ENCODE measurements at regions of chr17 and their contacts with region 1.

Region 1: GRCh38 chr17:73231841-73232586 is 29.7 kb downstream of the CPSF4L start:
- DNase-seq: peak; percentile 93 to 99 (median 96)
- ATAC-seq: peak; percentile 95
- H3K4me3 ChIP-seq: peak overlapping the region; percentile 95 to 100
- H3K4me3 Mint-ChIP-seq: peak overlapping the region; percentile 97
- H3K27ac ChIP-seq: peak overlapping the region; percentile 75 to 84
- H3K27ac Mint-ChIP-seq: peak overlapping the region; percentile 98
- H3K4me1 ChIP-seq: peaks cover 46% of the 10 kb centered on the region
- H3K4me1 Mint-ChIP-seq: peaks cover 71% of the 10 kb centered on the region
- H3K27me3 ChIP-seq: no peaks in the 10 kb centered on the region
- H3K27me3 Mint-ChIP-seq: no peaks in the 10 kb centered on the region
- CTCF ChIP-seq: no peak

Region 2: GRCh38 chr17:73192894-73193701 is 38.9 kb before region 1 on chr17 and contains the start of gene COG1:
- CTCF ChIA-PET with region 1: interaction called, 21 read pairs
- POLR2A ChIA-PET with region 1: interaction called, 10 read pairs
- intact Hi-C with region 1: loop called (anchors 1 kb)
- DNase-seq: peak; percentile 76 to 95 (median 89)
- ATAC-seq: peak; percentile 87
- H3K4me3 ChIP-seq: peak within 1 kb of the TSS; percentile 81 to 91
- H3K4me3 Mint-ChIP-seq: peak within 1 kb of the TSS; percentile 98
- H3K27ac ChIP-seq: peak within 1 kb of the TSS; percentile 79 to 83
- H3K27ac Mint-ChIP-seq: peak within 1 kb of the TSS; percentile 95
- H3K4me1 ChIP-seq: peaks cover 20% of the 10 kb centered on the region
- H3K4me1 Mint-ChIP-seq: peaks cover 27% of the 10 kb centered on the region
- H3K27me3 ChIP-seq: no peaks in the 10 kb centered on the region
- H3K27me3 Mint-ChIP-seq: no peaks in the 10 kb centered on the region
- CTCF ChIP-seq: no peak
- total RNA-seq, gene COG1: 91.3 to 95.6 TPM

Region 3: DNA sequence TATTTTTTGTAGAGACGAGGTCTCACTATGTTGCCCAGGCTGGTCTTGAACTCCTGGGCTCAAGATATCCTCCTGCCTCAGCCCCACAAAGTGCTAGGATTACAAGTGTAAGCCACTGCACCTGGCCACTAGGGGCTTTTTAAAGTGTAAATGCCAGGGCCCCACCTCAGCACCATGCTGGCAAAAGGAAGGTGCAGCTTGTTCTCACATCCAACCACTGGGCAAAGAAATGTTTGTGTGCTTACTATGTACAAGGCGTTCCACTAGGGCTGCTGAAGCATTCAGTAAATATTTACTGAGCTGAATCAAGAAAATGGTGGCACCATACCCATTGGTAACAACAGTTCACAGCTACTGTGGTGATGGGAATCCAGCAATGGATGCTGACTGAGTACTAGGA is 16.6 kb before region 1 on chr17:
- CTCF ChIA-PET with region 1: interaction called, 8 read pairs
- POLR2A ChIA-PET with region 1: interaction called, 20 read pairs
- intact Hi-C with region 1: loop called (anchors 1 kb)
- DNase-seq: no peak
- ATAC-seq: no peak
- H3K4me3 ChIP-seq: no peak overlapping the region
- H3K4me3 Mint-ChIP-seq: no peak overlapping the region
- H3K27ac ChIP-seq: no peak overlapping the region
- H3K27ac Mint-ChIP-seq: peak overlapping the region; percentile 81
- H3K4me1 ChIP-seq: peaks cover 17% of the 10 kb centered on the region
- H3K4me1 Mint-ChIP-seq: peaks cover 45% of the 10 kb centered on the region
- H3K27me3 ChIP-seq: no peaks in the 10 kb centered on the region
- H3K27me3 Mint-ChIP-seq: no peaks in the 10 kb centered on the region
- CTCF ChIP-seq: no peak

Region 4: GRCh38 chr17:73311781-73312641 is 80.0 kb after region 1 on chr17 and contains the start of gene CDC42EP4:
- CTCF ChIA-PET with region 1: interaction called, 3 read pairs
- POLR2A ChIA-PET with region 1: interaction called, 3 read pairs
- intact Hi-C with region 1: loop called in 1 of 2 experiments (anchors 5 kb)
- DNase-seq: peak; percentile 59 to 89 (median 82)
- ATAC-seq: peak; percentile 90
- H3K4me3 ChIP-seq: peak within 1 kb of the TSS; percentile 61 to 86
- H3K4me3 Mint-ChIP-seq: peak within 1 kb of the TSS; percentile 87
- H3K27ac ChIP-seq: peak within 1 kb of the TSS; percentile 11 to 64
- H3K27ac Mint-ChIP-seq: peak within 1 kb of the TSS; percentile 62
- H3K4me1 ChIP-seq: peaks cover 14% of the 10 kb centered on the region
- H3K4me1 Mint-ChIP-seq: peaks cover 17% of the 10 kb centered on the region
- H3K27me3 ChIP-seq: no peaks in the 10 kb centered on the region
- H3K27me3 Mint-ChIP-seq: no peaks in the 10 kb centered on the region
- CTCF ChIP-seq: no peak
- total RNA-seq, gene CDC42EP4: 3.5 to 4.4 TPM

Region 5: GRCh38 chr17:73748508-73748907 is 516.5 kb after region 1 on chr17:
- CTCF ChIA-PET with region 1: no interaction called
- POLR2A ChIA-PET with region 1: no interaction called
- intact Hi-C with region 1: no loop called
- DNase-seq: no peak
- ATAC-seq: no peak
- H3K4me3 ChIP-seq: no peak overlapping the region
- H3K4me3 Mint-ChIP-seq: no peak overlapping the region
- H3K27ac ChIP-seq: no peak overlapping the region
- H3K27ac Mint-ChIP-seq: no peak overlapping the region
- H3K4me1 ChIP-seq: no peaks in the 10 kb centered on the region
- H3K4me1 Mint-ChIP-seq: no peaks in the 10 kb centered on the region
- H3K27me3 ChIP-seq: no peaks in the 10 kb centered on the region
- H3K27me3 Mint-ChIP-seq: no peaks in the 10 kb centered on the region
- CTCF ChIP-seq: no peak

Measured in CD8-positive, alpha-beta T cell (primary cell).